ENCODE measurements at regions of chr4 and their contacts with region 1.

Region 1: GRCh38 chr4:8917868-8918783 is 46.5 kb upstream of the HMX1 start:
- DNase-seq: peak; percentile 70
- ATAC-seq: peak; percentile 73
- H3K4me3 Mint-ChIP-seq: no peak overlapping the region
- H3K27ac Mint-ChIP-seq: no peak overlapping the region
- H3K4me1 Mint-ChIP-seq: no peaks in the 10 kb centered on the region
- H3K27me3 Mint-ChIP-seq: no peaks in the 10 kb centered on the region

Region 2: DNA sequence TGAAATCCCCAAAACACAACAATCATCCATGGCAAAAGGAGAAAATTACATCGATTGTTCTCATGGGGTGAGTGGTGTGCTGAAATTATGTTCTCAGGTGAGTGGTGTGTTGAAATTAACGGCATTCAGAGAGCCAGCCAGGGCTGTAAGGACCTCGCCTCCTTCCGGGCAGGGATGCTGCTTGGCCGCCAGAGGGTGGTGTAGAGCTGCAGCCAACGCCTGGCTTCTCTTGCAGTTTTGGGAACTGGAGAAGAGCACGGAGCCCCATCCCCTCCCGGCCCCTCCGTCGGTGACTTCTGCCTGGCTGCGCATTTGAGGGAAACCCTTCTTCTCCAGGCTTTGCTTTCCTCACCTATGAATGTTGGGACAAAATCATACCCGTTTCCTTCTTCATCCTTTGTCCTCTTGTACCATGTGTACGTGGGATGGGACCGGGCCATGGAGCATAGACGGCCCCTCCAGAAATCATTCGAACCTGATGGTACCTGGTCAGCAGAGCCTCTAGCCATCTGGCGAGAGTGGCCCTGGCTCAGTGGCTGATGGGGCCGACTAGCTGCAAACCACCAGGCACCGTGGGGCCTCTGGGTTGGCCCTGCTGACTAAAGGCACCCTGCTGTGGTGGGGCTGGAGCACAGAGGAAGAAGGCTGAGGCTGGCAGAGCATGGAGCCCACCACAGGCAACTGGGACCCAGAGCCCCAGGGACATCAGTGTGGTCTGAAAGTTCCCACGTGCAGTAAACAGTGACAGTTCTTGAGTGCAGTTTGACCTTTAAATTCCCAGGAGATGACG is 449.2 kb before region 1 on chr4:
- CTCF ChIA-PET with region 1: interaction called, 10 read pairs
- DNase-seq: peak; percentile 65
- ATAC-seq: peak; percentile 83
- H3K4me3 Mint-ChIP-seq: no peak overlapping the region
- H3K27ac Mint-ChIP-seq: no peak overlapping the region
- H3K4me1 Mint-ChIP-seq: no peaks in the 10 kb centered on the region
- H3K27me3 Mint-ChIP-seq: no peaks in the 10 kb centered on the region

Region 3: DNA sequence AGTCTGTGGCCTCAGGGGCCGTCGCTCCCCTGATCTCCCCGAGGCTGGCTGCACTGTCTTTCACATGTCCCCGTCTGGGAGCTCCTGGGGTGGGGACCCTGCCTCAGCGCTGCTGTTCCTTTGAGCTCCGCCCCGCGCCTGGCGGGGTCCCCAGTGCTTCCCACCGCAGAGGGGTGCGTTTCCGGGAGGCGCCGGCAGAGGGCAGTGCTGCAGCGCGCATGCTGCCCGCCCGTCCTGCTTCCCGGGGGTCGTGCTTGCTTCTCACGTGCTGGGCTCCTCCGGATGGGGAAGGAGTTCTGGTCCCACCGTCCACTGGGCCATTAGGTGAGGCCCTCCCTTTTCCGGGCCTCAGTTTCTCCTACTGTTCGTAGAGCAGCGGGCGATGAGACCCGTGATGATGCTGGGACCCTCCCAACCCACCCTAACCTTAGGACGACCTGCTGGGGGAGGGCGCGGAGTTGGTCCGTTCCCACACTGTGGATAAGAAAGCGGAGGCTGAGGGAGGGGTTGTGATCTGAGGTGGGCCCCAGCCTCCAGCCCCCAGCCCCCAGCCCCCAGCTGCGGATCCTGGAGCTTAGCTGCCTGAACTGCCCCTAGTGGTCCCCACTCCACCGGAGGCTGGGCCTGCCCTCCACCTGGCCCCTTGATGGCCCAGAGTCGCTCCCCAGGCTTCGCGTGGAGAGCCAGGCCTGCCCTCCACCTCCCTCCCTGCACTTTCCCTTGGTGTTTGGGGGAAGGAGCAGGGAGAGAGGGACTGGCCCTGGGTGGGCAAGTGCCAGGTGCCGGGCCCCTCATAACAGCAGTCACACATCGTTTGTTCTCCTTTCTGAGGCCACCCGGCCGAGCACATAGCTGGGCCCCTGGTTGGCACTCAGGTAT is 310.3 kb before region 1 on chr4:
- CTCF ChIA-PET with region 1: interaction called, 18 read pairs
- DNase-seq: no peak
- ATAC-seq: peak; percentile 42
- H3K4me3 Mint-ChIP-seq: no peak overlapping the region
- H3K27ac Mint-ChIP-seq: no peak overlapping the region
- H3K4me1 Mint-ChIP-seq: no peaks in the 10 kb centered on the region
- H3K27me3 Mint-ChIP-seq: peaks cover 3% of the 10 kb centered on the region

Region 4: DNA sequence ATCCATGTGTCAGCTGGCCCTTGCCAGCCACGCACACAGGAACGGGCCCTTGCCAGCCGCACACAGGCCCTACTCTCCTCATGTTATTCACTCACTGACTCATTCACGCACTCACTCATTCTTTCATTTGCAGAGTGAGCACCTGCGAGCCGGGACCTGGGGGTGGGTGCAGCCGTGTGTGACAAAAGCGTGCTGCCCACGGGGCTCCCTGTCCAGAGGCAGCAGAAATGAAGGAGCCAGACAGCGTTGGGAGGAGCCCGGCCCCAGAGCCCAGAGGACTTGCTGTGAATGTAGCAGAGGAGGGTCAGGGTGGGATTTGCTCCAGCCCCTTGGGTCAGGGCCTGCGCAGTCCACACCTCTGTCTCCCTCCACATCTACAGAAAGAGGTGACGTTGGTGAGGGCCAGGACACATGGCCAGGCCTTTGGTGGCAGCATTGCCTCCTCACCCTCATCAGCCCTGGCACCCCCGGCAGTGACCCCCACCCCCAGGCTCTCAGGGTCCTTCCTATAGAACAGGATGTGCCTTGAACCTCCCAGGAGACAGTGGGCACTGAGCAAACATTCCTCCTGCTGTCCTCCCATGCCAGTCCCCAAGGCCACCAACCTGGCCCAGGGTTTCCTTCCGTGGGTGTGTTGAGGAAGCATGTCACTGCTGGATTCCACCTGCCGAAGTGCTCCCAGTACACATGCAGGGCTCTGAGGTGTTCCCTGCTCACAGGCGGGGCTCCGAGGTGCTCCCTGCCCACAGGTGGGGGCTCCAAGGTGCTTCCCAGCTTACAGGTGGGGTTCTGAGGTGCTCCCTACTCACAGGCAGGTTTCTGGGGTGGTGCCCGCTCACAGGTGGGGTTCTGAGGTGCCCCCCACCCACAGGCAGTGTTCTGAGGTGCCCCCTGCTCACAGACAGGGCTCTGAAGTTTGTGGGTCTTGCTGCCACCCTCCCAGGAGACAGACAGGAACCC is 152.2 kb before region 1 on chr4:
- CTCF ChIA-PET with region 1: no interaction called
- DNase-seq: no peak
- ATAC-seq: no peak
- H3K4me3 Mint-ChIP-seq: no peak overlapping the region
- H3K27ac Mint-ChIP-seq: no peak overlapping the region
- H3K4me1 Mint-ChIP-seq: no peaks in the 10 kb centered on the region
- H3K27me3 Mint-ChIP-seq: no peaks in the 10 kb centered on the region